Activated T-helper 1 cell treated with anti-CD3 and anti-CD28 coated beads, Interleukin-12 subunit alpha, Interleukin-12 subunit beta, Interleukin-2, Interleukin-4 antibody, amounts not matched to agents 30 ng/mL and 10 ng/mL and 1 ng/mL, durations not matched to agents 14 hours and 24 hours and 36 hours (primary cell): ENCODE measurements at regions of chr17 and their contacts with region 1.

Region 1: GRCh38 chr17:43576563-43577229 is 30.6 kb upstream of the ETV4 start:
- DNase-seq: peak; percentile 42
- H3K4me3 Mint-ChIP-seq: no peak overlapping the region
- H3K27ac Mint-ChIP-seq: no peak overlapping the region
- H3K4me1 Mint-ChIP-seq: peaks cover 16% of the 10 kb centered on the region
- H3K27me3 Mint-ChIP-seq: peaks cover 2% of the 10 kb centered on the region

Region 2: DNA sequence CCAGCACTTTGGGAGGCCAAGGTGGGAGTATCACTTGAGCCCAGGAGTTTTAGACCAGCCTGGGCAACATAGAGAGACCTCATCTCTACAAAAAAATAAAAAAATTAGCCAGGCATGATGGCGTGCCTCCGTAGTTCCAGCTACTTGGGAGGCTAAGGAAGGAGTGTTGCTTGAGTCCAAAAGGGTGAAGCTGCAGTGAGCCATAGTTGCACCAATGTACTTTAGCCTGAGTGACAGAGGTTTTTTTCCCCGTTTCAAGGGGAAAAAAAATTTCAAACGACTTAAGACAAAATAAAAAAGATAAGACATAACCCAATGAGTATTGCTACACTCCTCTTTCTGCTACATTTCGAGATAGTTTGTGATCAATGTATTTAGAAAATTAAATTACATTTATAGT is 86.1 kb before region 1 on chr17:
- intact Hi-C with region 1: no loop called
- DNase-seq: no peak
- H3K4me3 Mint-ChIP-seq: no peak overlapping the region
- H3K27ac Mint-ChIP-seq: no peak overlapping the region
- H3K4me1 Mint-ChIP-seq: peaks cover 6% of the 10 kb centered on the region
- H3K27me3 Mint-ChIP-seq: no peaks in the 10 kb centered on the region

Region 3: GRCh38 chr17:43517615-43518386 is 58.9 kb before region 1 on chr17:
- intact Hi-C with region 1: loop called (anchors 1 kb)
- DNase-seq: no peak
- H3K4me3 Mint-ChIP-seq: no peak overlapping the region
- H3K27ac Mint-ChIP-seq: peak overlapping the region; percentile 45
- H3K4me1 Mint-ChIP-seq: peaks cover 14% of the 10 kb centered on the region
- H3K27me3 Mint-ChIP-seq: no peaks in the 10 kb centered on the region

Region 4: DNA sequence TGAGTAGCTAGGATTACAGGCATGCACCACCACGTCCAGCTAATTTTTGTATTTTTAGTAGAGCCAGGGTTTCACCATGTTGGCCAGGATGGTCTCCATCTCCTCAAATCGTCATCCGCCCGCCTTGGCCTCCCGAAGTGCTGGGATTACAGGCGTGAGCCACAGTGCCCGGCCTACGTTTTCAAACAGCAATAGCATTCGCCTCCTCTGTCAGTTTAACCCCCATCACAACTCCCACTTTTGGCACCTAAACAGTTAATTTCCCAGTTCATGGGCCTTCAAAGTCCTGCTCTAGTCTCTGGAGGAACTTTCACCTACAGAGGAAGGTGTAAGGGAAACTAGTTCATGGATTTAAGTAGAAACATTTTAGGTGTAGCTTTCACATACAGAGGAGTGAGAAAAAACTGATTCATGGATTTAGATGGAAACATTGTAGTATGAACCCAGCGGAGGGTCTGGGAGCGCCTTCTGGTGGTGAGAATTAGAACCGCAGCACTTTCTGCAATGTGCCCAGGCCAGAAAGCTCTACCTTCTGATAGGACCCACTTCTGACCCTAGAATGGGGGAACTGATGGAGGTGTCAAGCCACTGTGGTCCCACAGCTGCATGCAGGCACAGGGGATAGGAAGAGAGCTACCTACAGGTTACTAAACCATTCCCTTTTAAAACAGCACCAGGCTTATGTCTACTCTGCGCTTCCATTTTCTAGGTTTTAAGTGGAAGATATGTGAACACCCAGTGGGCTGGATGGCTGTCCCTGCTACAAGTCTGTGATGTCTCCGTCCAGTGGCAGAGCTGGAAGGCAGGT is 97.0 kb after region 1 on chr17:
- intact Hi-C with region 1: loop called (anchors 1 kb)
- DNase-seq: peak; percentile 58
- H3K4me3 Mint-ChIP-seq: no peak overlapping the region
- H3K27ac Mint-ChIP-seq: no peak overlapping the region
- H3K4me1 Mint-ChIP-seq: peaks cover 11% of the 10 kb centered on the region
- H3K27me3 Mint-ChIP-seq: peaks cover 11% of the 10 kb centered on the region

Region 5: DNA sequence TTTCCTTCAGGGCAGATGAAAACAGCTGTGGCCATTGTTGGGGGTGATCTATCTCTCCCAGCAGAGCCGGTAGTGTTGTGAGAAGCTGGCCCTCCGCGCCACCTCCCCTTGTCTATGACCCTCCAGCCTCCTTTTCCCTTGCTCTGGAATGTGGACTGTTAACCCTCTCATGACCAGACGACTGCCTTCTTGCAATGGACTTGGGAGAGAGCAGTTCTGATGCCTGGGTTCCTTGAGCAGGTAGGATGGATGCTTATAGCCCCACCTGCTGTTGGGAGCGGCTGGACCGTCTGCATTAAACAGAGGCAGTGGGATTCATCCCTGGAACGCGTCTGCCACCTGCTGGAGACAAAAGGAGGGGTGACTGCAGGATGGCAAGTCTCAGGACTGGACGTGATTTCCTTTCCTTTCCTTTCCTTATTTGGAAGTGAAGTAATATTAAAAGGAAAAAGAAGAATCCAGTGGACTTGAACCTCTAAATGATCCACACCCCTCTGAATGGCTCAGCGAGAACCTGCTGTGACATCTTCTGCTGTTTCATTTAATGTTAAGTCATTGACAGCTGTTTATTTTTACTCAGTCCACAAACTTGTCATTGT is 183.7 kb after region 1 on chr17:
- intact Hi-C with region 1: loop called (anchors 1 kb)
- DNase-seq: peak; percentile 79
- H3K4me3 Mint-ChIP-seq: no peak overlapping the region
- H3K27ac Mint-ChIP-seq: no peak overlapping the region
- H3K4me1 Mint-ChIP-seq: no peaks in the 10 kb centered on the region
- H3K27me3 Mint-ChIP-seq: peaks cover 19% of the 10 kb centered on the region